GM12878 (cell line): ENCODE measurements at regions of chr7 and their contacts with region 1.

Region 1: DNA sequence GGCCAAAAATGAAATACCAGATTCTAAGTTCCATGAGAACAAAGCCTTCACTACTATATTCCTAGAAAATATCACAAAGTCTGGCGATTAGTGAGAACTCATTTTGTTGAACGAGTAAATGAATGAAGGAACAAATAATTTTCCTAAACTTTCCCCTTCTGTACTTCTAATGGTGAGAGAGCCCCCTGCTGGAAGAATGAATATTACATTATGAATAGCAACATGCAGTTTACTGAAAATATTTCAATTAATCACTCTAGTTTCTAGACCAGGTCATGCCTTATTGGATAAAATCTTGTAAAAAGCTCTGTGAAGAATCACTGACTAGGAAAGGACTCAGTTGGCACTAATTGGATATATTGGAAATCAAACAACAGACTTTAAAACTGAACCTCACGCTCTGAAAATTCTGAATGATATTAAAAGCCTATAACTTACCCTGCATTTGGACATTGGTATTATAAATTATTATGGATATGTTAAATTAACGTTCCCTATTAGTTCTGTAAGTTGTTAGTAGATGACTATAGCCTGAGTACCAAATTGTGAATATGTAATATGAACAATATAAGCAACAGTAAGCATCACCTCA is 32.4 kb upstream of the MTPN start:
- DNase-seq: no peak
- ATAC-seq: peak; percentile 71
- H3K4me3 ChIP-seq: no peak overlapping the region
- H3K27ac ChIP-seq: no peak overlapping the region
- H3K4me1 ChIP-seq: no peaks in the 10 kb centered on the region
- H3K27me3 ChIP-seq: no peaks in the 10 kb centered on the region
- CTCF ChIP-seq: peak; percentile 43 to 69 (median 46); a peak in 5 of 6 replicates
- EP300 ChIP-seq: no peak
- POLR2A ChIP-seq: no peak
- RAD21 ChIP-seq: peak; percentile 93

Region 2: GRCh38 chr7:135672560-135673359 is 336.8 kb before region 1 on chr7:
- CTCF ChIA-PET with region 1: interaction called, 12 read pairs
- POLR2A ChIA-PET with region 1: no interaction called
- RAD21 ChIA-PET with region 1: no interaction called
- SMC1A ChIA-PET with region 1: interaction called, 8 read pairs
- in situ Hi-C with region 1: no loop called
- intact Hi-C with region 1: loop called (anchors 5 kb)
- DNase-seq: no peak
- ATAC-seq: peak; percentile 91
- H3K4me3 ChIP-seq: no peak overlapping the region
- H3K27ac ChIP-seq: no peak overlapping the region
- H3K4me1 ChIP-seq: no peaks in the 10 kb centered on the region; the same call in 1 of the 2 replicates
- H3K27me3 ChIP-seq: no peaks in the 10 kb centered on the region
- CTCF ChIP-seq: peak; percentile 65 to 82 (median 68)
- EP300 ChIP-seq: no peak
- POLR2A ChIP-seq: no peak
- RAD21 ChIP-seq: peak; percentile 71

Region 3: GRCh38 chr7:135801045-135801693 is 208.4 kb before region 1 on chr7:
- CTCF ChIA-PET with region 1: interaction called, 81 read pairs
- POLR2A ChIA-PET with region 1: no interaction called
- RAD21 ChIA-PET with region 1: interaction called, 12 read pairs
- SMC1A ChIA-PET with region 1: interaction called, 15 read pairs
- in situ Hi-C with region 1: loop called (anchors 5 kb)
- intact Hi-C with region 1: loop called (anchors 1 kb)
- DNase-seq: peak; percentile 35
- ATAC-seq: peak; percentile 91
- H3K4me3 ChIP-seq: no peak overlapping the region
- H3K27ac ChIP-seq: no peak overlapping the region
- H3K4me1 ChIP-seq: no peaks in the 10 kb centered on the region
- H3K27me3 ChIP-seq: 0 out of 4 replicates have a peak, but pooled peaks cover 0 to 2% of the 10 kb centered on the region in 2 experiments
- CTCF ChIP-seq: peak; percentile 71 to 87 (median 86)
- EP300 ChIP-seq: no peak
- POLR2A ChIP-seq: no peak
- RAD21 ChIP-seq: peak; percentile 99

Region 4: GRCh38 chr7:135965602-135966001 is 44.0 kb before region 1 on chr7:
- CTCF ChIA-PET with region 1: interaction called, 12 read pairs
- POLR2A ChIA-PET with region 1: no interaction called
- RAD21 ChIA-PET with region 1: no interaction called
- SMC1A ChIA-PET with region 1: interaction called, 4 read pairs
- in situ Hi-C with region 1: no loop called
- intact Hi-C with region 1: loop called (anchors 5 kb)
- DNase-seq: peak; percentile 37
- ATAC-seq: peak; percentile 62
- H3K4me3 ChIP-seq: no peak overlapping the region; the same call in 1 of the 2 replicates
- H3K27ac ChIP-seq: peak overlapping the region; percentile 31; the same call in 1 of the 2 replicates
- H3K4me1 ChIP-seq: peaks cover 7% of the 10 kb centered on the region; the same call in 1 of the 2 replicates
- H3K27me3 ChIP-seq: no peaks in the 10 kb centered on the region
- CTCF ChIP-seq: no peak
- EP300 ChIP-seq: peak; percentile 62 to 75; a peak in 2 of 4 replicates
- POLR2A ChIP-seq: no peak
- RAD21 ChIP-seq: no peak

Region 5: GRCh38 chr7:135970682-135971365 is 38.8 kb before region 1 on chr7:
- CTCF ChIA-PET with region 1: interaction called, 12 read pairs
- POLR2A ChIA-PET with region 1: no interaction called
- RAD21 ChIA-PET with region 1: no interaction called
- SMC1A ChIA-PET with region 1: interaction called, 4 read pairs
- in situ Hi-C with region 1: no loop called
- intact Hi-C with region 1: loop called (anchors 5 kb)
- DNase-seq: peak; percentile 66
- ATAC-seq: peak; percentile 69
- H3K4me3 ChIP-seq: no peak overlapping the region
- H3K27ac ChIP-seq: peak overlapping the region; percentile 41
- H3K4me1 ChIP-seq: peaks cover 20% of the 10 kb centered on the region; the same call in 1 of the 2 replicates
- H3K27me3 ChIP-seq: no peaks in the 10 kb centered on the region
- CTCF ChIP-seq: no peak
- EP300 ChIP-seq: peak in 1 of 2 experiments; percentile 42; a peak in 1 of 4 replicates
- POLR2A ChIP-seq: no peak
- RAD21 ChIP-seq: no peak

Region 6: GRCh38 chr7:135993950-135994349 is 15.6 kb before region 1 on chr7:
- CTCF ChIA-PET with region 1: interaction called, 15 read pairs
- POLR2A ChIA-PET with region 1: no interaction called
- RAD21 ChIA-PET with region 1: interaction called, 5 read pairs
- SMC1A ChIA-PET with region 1: interaction called, 3 read pairs
- in situ Hi-C with region 1: no loop called
- intact Hi-C with region 1: no loop called
- DNase-seq: no peak
- ATAC-seq: peak; percentile 84
- H3K4me3 ChIP-seq: no peak overlapping the region
- H3K27ac ChIP-seq: no peak overlapping the region
- H3K4me1 ChIP-seq: peaks cover 3% of the 10 kb centered on the region
- H3K27me3 ChIP-seq: no peaks in the 10 kb centered on the region
- CTCF ChIP-seq: no peak
- EP300 ChIP-seq: no peak
- POLR2A ChIP-seq: no peak
- RAD21 ChIP-seq: no peak

Region 7: DNA sequence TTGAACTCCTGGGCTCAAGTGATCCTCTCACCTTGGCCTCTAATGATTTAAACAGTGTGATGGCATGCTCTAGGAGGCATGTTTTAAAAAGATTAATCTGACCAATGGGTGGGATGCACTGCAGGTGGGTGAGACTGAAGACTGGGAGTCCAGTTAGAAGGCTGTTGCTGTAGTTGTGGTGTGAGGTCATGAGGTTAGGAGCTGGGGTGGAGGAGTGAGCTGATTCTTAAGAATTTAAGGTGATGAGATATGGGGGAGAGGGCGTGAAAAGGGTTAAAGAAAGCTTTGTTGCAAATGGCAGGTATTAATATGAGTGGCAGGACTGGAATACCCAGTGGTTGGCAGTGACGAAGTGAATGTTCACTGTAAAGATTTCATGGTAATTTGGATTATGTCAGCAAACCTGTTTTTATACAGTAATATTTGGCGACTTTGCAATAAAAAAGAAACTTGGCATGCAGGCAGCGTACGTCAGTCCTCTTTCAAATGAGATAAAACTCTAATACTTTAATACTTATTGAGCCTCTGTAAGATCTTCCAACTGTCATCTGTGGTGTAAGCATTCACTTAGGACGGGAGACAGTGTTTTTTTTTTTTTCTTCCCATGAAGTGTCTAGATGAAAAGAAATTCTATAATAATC is 40.4 kb after region 1 on chr7:
- CTCF ChIA-PET with region 1: no interaction called
- POLR2A ChIA-PET with region 1: no interaction called
- RAD21 ChIA-PET with region 1: no interaction called
- SMC1A ChIA-PET with region 1: no interaction called
- in situ Hi-C with region 1: no loop called
- intact Hi-C with region 1: no loop called
- DNase-seq: no peak
- ATAC-seq: no peak
- H3K4me3 ChIP-seq: no peak overlapping the region
- H3K27ac ChIP-seq: no peak overlapping the region
- H3K4me1 ChIP-seq: no peaks in the 10 kb centered on the region
- H3K27me3 ChIP-seq: no peaks in the 10 kb centered on the region
- CTCF ChIP-seq: no peak
- EP300 ChIP-seq: no peak
- POLR2A ChIP-seq: no peak
- RAD21 ChIP-seq: no peak

Region 8: GRCh38 chr7:136114966-136115762 is 105.6 kb after region 1 on chr7:
- CTCF ChIA-PET with region 1: no interaction called
- POLR2A ChIA-PET with region 1: no interaction called
- RAD21 ChIA-PET with region 1: no interaction called
- SMC1A ChIA-PET with region 1: no interaction called
- in situ Hi-C with region 1: no loop called
- intact Hi-C with region 1: no loop called
- DNase-seq: no peak
- ATAC-seq: peak; percentile 99
- H3K4me3 ChIP-seq: no peak overlapping the region
- H3K27ac ChIP-seq: no peak overlapping the region
- H3K4me1 ChIP-seq: no peaks in the 10 kb centered on the region
- H3K27me3 ChIP-seq: no peaks in the 10 kb centered on the region
- CTCF ChIP-seq: peak; percentile 77 to 79 (median 79)
- EP300 ChIP-seq: no peak
- POLR2A ChIP-seq: no peak
- RAD21 ChIP-seq: peak; percentile 61

Region 9: GRCh38 chr7:136424058-136424457 is 414.5 kb after region 1 on chr7:
- CTCF ChIA-PET with region 1: no interaction called
- POLR2A ChIA-PET with region 1: no interaction called
- RAD21 ChIA-PET with region 1: no interaction called
- SMC1A ChIA-PET with region 1: no interaction called
- in situ Hi-C with region 1: no loop called
- intact Hi-C with region 1: no loop called
- DNase-seq: no peak
- ATAC-seq: no peak
- H3K4me3 ChIP-seq: no peak overlapping the region
- H3K27ac ChIP-seq: no peak overlapping the region
- H3K4me1 ChIP-seq: no peaks in the 10 kb centered on the region
- H3K27me3 ChIP-seq: no peaks in the 10 kb centered on the region
- CTCF ChIP-seq: no peak
- EP300 ChIP-seq: no peak
- POLR2A ChIP-seq: no peak
- RAD21 ChIP-seq: no peak